SK-N-SH (cell line): ENCODE measurements at regions of chr10 and their contacts with region 1.

Region 1: GRCh38 chr10:75210282-75211006 is at the start of gene VDAC2:
- DNase-seq: peak; percentile 99
- H3K4me3 ChIP-seq: peak within 1 kb of the TSS; percentile 84 to 93
- H3K27ac ChIP-seq: peak within 1 kb of the TSS; percentile 96 to 98
- H3K4me1 ChIP-seq: peaks cover 13 to 15% of the 10 kb centered on the region in 2 experiments; a peak in 3 of 4 replicates
- H3K27me3 ChIP-seq: no peaks in the 10 kb centered on the region
- CTCF ChIP-seq: no peak
- EP300 ChIP-seq: no peak; a peak in 1 of 4 replicates
- RAD21 ChIP-seq: no peak
- polyA plus RNA-seq, gene VDAC2: 98.3 and 101 TPM in 2 replicates

Region 2: DNA sequence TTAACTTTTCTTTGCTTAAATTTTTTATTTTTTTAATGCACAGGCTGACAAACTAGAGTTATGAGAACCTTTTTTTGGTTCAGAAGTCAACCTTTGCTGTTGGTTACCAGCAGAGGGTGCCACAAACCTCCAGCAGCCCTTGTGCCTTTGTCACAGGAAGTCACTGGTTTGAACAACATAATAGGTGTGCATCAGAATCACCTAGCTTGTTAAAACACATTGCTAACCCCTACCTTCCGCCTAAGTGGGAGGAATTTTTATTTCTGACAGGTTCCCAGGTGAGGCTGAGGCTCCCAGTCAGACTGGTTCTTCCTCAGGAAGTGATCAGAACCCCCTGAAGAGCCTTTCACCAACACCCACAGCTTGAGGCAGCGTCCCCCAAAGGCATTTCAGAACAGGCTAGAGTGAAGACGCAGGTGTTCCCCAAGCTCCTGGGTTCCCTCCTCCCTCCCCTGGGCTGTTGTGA is 22.4 kb before region 1 on chr10:
- CTCF ChIA-PET with region 1: interaction called, 12 read pairs
- POLR2A ChIA-PET with region 1: no interaction called
- DNase-seq: peak; percentile 63
- H3K4me3 ChIP-seq: no peak overlapping the region
- H3K27ac ChIP-seq: no peak overlapping the region
- H3K4me1 ChIP-seq: 0 out of 4 replicates have a peak, but pooled peaks cover 0 to 5% of the 10 kb centered on the region in 2 experiments
- H3K27me3 ChIP-seq: no peaks in the 10 kb centered on the region
- CTCF ChIP-seq: peak; percentile 75
- EP300 ChIP-seq: no peak
- RAD21 ChIP-seq: peak; percentile 74

Region 3: GRCh38 chr10:75226656-75227055 is 16.2 kb after region 1 on chr10:
- CTCF ChIA-PET with region 1: interaction called, 36 read pairs
- POLR2A ChIA-PET with region 1: interaction called, 15 read pairs
- DNase-seq: no peak
- H3K4me3 ChIP-seq: no peak overlapping the region
- H3K27ac ChIP-seq: peak overlapping the region; percentile 2 to 69; a peak in 1 of 4 replicates
- H3K4me1 ChIP-seq: peaks cover 8 to 34% of the 10 kb centered on the region in 2 experiments
- H3K27me3 ChIP-seq: no peaks in the 10 kb centered on the region
- CTCF ChIP-seq: no peak
- EP300 ChIP-seq: no peak
- RAD21 ChIP-seq: no peak